Caco-2 (cell line): ENCODE measurements at regions of chr15 and their contacts with region 1.

Region 1: DNA sequence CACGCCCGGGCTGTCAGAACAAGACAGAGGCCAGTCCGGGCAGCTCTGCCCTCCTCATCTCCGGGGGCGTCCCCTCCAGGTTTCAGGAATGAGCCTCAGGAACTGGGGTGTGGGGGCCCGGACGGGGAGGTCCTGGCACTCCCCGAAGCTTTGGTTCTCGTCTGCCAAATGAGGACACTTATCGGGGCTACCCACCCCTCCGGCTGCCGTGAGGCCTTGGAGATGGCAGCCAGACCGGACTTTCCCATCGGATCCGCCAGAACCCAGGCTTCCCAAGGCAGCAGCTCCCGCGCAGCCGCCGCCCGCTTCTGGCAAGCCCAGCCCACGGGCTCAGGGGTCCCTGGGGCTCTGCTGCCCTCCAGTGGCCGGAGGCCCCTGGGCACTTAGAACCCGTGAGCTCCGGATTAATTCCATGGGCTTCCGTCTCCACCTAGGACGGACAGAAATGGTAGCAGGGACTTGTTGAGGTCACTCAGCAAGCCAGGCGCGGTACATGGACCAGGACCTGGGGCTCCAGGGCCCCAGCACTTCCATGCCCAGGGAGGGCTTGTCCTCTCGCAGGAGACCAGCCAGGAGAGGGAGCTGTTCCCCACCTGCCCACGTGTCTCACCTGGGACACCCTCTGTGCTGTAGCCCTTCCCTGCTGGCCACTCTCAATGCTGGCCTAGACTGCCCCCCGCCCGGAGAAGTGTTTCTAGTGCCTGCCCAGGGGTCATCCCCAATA is 89.4 kb downstream of the LINGO1 start:
- DNase-seq: peak; percentile 82 to 89
- H3K4me3 ChIP-seq: peak overlapping the region; percentile 48
- H3K4me3 Mint-ChIP-seq: peak overlapping the region; percentile 67
- H3K27ac Mint-ChIP-seq: peak overlapping the region; percentile 50
- H3K4me1 ChIP-seq: peaks cover 13% of the 10 kb centered on the region; the same call in 1 of the 2 replicates
- H3K4me1 Mint-ChIP-seq: peaks cover 14% of the 10 kb centered on the region
- H3K27me3 ChIP-seq: no peaks in the 10 kb centered on the region
- H3K27me3 Mint-ChIP-seq: no peaks in the 10 kb centered on the region
- CTCF ChIP-seq: peak; percentile 92 to 93

Region 2: DNA sequence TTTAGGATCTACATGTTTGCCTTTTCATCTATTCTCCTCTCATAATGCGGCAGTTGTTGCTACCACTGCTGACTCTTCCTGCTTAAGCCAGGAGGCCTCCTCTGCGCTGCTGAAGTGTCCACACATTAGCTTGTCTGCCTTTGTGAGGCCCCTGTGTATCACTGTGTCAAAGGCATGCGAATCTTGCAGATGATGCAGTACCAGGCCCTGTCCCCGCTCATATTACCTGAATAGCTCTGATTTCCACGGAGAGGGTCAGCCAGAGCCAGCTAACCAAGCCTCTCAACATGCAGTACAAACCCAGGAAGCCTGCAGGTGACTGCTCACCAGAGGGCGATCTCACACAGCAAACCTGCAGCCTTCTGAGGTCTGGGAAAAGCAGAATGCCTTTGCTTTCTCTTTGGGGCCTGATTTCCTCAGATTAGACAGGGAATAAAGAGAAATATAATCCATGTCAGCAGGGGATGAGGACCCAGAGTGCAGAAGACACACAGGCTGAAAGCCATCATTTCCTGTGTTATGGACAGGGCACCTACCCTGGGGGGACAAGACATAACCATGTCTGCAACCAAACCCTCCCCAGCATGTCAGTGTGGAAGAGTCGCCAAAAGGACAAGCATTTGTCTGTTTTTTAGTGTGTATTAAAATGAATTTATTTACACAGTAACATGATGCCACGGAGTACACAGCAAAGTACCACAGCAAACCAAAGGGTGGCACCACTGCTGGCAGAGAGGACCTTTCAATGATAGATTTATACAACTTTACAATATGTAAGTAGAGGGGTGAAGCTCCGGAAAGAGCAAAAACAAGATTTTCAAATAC is 435.6 kb before region 1 on chr15:
- CTCF ChIA-PET with region 1: interaction called, 12 read pairs
- POLR2A ChIA-PET with region 1: no interaction called
- intact Hi-C with region 1: no loop called
- DNase-seq: peak; percentile 69 to 70
- H3K4me3 ChIP-seq: no peak overlapping the region
- H3K4me3 Mint-ChIP-seq: no peak overlapping the region
- H3K27ac Mint-ChIP-seq: peak overlapping the region; percentile 65
- H3K4me1 ChIP-seq: peaks cover 8% of the 10 kb centered on the region
- H3K4me1 Mint-ChIP-seq: peaks cover 13% of the 10 kb centered on the region
- H3K27me3 ChIP-seq: no peaks in the 10 kb centered on the region
- H3K27me3 Mint-ChIP-seq: no peaks in the 10 kb centered on the region
- CTCF ChIP-seq: peak; percentile 73 to 86

Region 3: DNA sequence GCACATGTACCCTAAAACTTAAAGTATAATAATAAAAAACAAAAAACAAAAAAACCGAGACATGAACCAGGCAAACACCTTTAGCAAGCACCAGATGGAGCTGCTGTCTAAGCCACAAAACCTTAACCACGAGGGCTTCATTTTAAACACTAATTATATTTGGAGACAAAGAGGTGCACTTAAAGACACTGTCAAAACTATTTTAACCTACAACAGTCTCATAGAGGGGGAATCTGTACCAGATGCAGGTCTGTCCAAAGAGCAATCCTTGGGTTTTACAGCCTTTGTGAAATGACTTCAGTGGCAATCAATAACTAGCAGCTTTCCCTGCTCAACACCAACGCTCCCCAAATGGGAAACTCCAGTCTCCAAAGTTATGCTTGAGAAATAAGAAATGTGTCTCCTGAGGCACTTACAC is 356.7 kb before region 1 on chr15:
- CTCF ChIA-PET with region 1: interaction called, 44 read pairs
- POLR2A ChIA-PET with region 1: no interaction called
- intact Hi-C with region 1: loop called (anchors 1 kb)
- DNase-seq: no peak
- H3K4me3 ChIP-seq: no peak overlapping the region
- H3K4me3 Mint-ChIP-seq: no peak overlapping the region
- H3K27ac Mint-ChIP-seq: peak overlapping the region; percentile 25
- H3K4me1 ChIP-seq: peaks cover 28% of the 10 kb centered on the region
- H3K4me1 Mint-ChIP-seq: peaks cover 14% of the 10 kb centered on the region
- H3K27me3 ChIP-seq: no peaks in the 10 kb centered on the region
- H3K27me3 Mint-ChIP-seq: no peaks in the 10 kb centered on the region
- CTCF ChIP-seq: peak; percentile 43 to 44

Region 4: DNA sequence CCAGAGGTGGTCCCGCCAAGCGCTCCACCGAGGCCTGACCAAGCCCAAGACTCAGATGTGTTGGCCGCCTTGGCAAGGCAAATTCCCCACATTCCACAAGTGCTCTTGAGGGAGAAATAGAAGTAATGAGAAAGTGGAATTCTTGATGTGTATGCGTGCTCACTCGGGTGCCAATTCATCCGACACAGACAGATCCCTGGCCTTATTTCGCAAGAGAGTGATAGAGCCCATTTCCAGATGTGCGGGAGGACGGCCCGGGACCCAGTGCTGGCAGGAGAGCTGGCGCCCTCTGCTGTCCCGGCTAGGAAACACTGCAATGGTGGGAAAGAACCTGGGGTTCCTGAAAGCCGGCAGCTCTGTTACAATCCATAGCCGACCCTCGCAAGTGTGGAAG is 46.6 kb before region 1 on chr15:
- CTCF ChIA-PET with region 1: interaction called, 38 read pairs
- POLR2A ChIA-PET with region 1: no interaction called
- intact Hi-C with region 1: no loop called
- DNase-seq: peak; percentile 79 to 82
- H3K4me3 ChIP-seq: no peak overlapping the region
- H3K4me3 Mint-ChIP-seq: no peak overlapping the region
- H3K27ac Mint-ChIP-seq: no peak overlapping the region
- H3K4me1 ChIP-seq: no peaks in the 10 kb centered on the region
- H3K4me1 Mint-ChIP-seq: peaks cover 15% of the 10 kb centered on the region
- H3K27me3 ChIP-seq: no peaks in the 10 kb centered on the region
- H3K27me3 Mint-ChIP-seq: no peaks in the 10 kb centered on the region
- CTCF ChIP-seq: peak; percentile 83 to 90

Region 5: GRCh38 chr15:77526791-77527778 is 16.2 kb before region 1 on chr15:
- CTCF ChIA-PET with region 1: interaction called, 18 read pairs
- POLR2A ChIA-PET with region 1: no interaction called
- intact Hi-C with region 1: no loop called
- DNase-seq: peak; percentile 84 to 90
- H3K4me3 ChIP-seq: no peak overlapping the region
- H3K4me3 Mint-ChIP-seq: peak overlapping the region; percentile 31
- H3K27ac Mint-ChIP-seq: peak overlapping the region; percentile 48
- H3K4me1 ChIP-seq: peaks cover 50% of the 10 kb centered on the region
- H3K4me1 Mint-ChIP-seq: peaks cover 34% of the 10 kb centered on the region
- H3K27me3 ChIP-seq: no peaks in the 10 kb centered on the region
- H3K27me3 Mint-ChIP-seq: no peaks in the 10 kb centered on the region
- CTCF ChIP-seq: no peak

Region 6: GRCh38 chr15:77584201-77584600 is 40.9 kb after region 1 on chr15:
- CTCF ChIA-PET with region 1: interaction called, 10 read pairs
- POLR2A ChIA-PET with region 1: no interaction called
- intact Hi-C with region 1: no loop called
- DNase-seq: peak; percentile 36 to 47
- H3K4me3 ChIP-seq: no peak overlapping the region
- H3K4me3 Mint-ChIP-seq: no peak overlapping the region
- H3K27ac Mint-ChIP-seq: no peak overlapping the region
- H3K4me1 ChIP-seq: no peaks in the 10 kb centered on the region
- H3K4me1 Mint-ChIP-seq: no peaks in the 10 kb centered on the region
- H3K27me3 ChIP-seq: no peaks in the 10 kb centered on the region
- H3K27me3 Mint-ChIP-seq: no peaks in the 10 kb centered on the region
- CTCF ChIP-seq: peak; percentile 33 to 64

Region 7: GRCh38 chr15:77709135-77709886 is 166.0 kb after region 1 on chr15:
- CTCF ChIA-PET with region 1: no interaction called
- POLR2A ChIA-PET with region 1: no interaction called
- intact Hi-C with region 1: no loop called
- DNase-seq: no peak
- H3K4me3 ChIP-seq: no peak overlapping the region
- H3K4me3 Mint-ChIP-seq: no peak overlapping the region
- H3K27ac Mint-ChIP-seq: no peak overlapping the region
- H3K4me1 ChIP-seq: no peaks in the 10 kb centered on the region
- H3K4me1 Mint-ChIP-seq: no peaks in the 10 kb centered on the region
- H3K27me3 ChIP-seq: no peaks in the 10 kb centered on the region
- H3K27me3 Mint-ChIP-seq: peaks cover 41% of the 10 kb centered on the region
- CTCF ChIP-seq: no peak

Region 8: GRCh38 chr15:78131295-78132061 is 588.2 kb after region 1 on chr15 and contains the start of gene CIB2:
- CTCF ChIA-PET with region 1: no interaction called
- POLR2A ChIA-PET with region 1: no interaction called
- intact Hi-C with region 1: no loop called
- DNase-seq: peak; percentile 59 to 82
- H3K4me3 ChIP-seq: peak within 1 kb of the TSS; percentile 69
- H3K4me3 Mint-ChIP-seq: peak within 1 kb of the TSS; percentile 81
- H3K27ac Mint-ChIP-seq: peak within 1 kb of the TSS; percentile 57
- H3K4me1 ChIP-seq: peaks cover 18% of the 10 kb centered on the region
- H3K4me1 Mint-ChIP-seq: peaks cover 17% of the 10 kb centered on the region
- H3K27me3 ChIP-seq: no peaks in the 10 kb centered on the region
- H3K27me3 Mint-ChIP-seq: no peaks in the 10 kb centered on the region
- CTCF ChIP-seq: peak; percentile 14 to 62
- total RNA-seq, gene CIB2: 0.67 and 0.75 TPM in 2 replicates